ENCODE measurements at regions of chr12 and their contacts with region 1.

Region 1: DNA sequence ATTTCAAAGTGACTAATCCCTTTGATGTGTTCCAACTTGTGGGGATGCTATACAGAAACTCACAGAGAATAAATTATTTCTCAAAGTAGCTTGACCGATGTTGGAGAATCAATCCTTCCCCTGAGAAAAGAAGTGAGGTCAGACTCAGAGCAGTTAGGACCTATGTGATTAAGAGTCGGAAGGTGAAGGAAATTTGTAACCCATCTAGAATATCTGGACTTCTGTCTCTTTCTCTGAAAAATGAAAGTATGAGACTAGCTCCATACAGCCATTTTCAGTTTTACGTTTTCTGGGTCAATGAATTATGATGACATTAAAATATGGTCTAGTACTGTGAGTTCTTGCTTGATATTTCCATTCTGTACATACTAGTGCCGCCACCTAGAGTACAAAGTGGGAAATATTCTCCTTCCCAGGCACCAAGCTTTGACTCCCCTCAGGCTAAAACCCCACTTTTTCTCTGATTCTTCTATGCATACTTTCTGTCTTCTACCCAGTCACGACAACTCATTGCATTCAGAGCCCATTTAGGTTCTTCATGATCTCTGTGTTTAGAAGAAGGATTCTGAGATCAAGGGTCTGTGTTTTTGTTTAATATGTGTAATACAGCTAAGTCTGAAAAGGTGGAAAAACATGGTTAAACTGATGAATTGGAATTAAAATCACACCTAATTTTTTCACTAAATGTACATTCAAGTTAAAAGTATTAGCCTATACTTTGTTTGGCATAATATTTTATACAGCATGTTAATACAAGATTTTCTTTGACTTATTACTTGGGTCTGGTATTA is 6.9 kb upstream of the NTS start:
- DNase-seq: peak in 1 of 2 experiments; percentile 58
- H3K4me3 ChIP-seq: no peak overlapping the region
- H3K4me3 Mint-ChIP-seq: no peak overlapping the region
- H3K27ac Mint-ChIP-seq: no peak overlapping the region
- H3K4me1 ChIP-seq: no peaks in the 10 kb centered on the region
- H3K4me1 Mint-ChIP-seq: no peaks in the 10 kb centered on the region
- H3K27me3 ChIP-seq: no peaks in the 10 kb centered on the region
- H3K27me3 Mint-ChIP-seq: peaks cover 10% of the 10 kb centered on the region
- CTCF ChIP-seq: peak; percentile 71 to 75

Region 2: GRCh38 chr12:85626001-85626781 is 241.0 kb before region 1 on chr12:
- CTCF ChIA-PET with region 1: no interaction called
- POLR2A ChIA-PET with region 1: no interaction called
- intact Hi-C with region 1: no loop called
- DNase-seq: no peak
- H3K4me3 ChIP-seq: no peak overlapping the region
- H3K4me3 Mint-ChIP-seq: no peak overlapping the region
- H3K27ac Mint-ChIP-seq: no peak overlapping the region
- H3K4me1 ChIP-seq: 0 out of 2 replicates have a peak, but pooled peaks cover 3% of the 10 kb centered on the region
- H3K4me1 Mint-ChIP-seq: peaks cover 6% of the 10 kb centered on the region
- H3K27me3 ChIP-seq: no peaks in the 10 kb centered on the region
- H3K27me3 Mint-ChIP-seq: no peaks in the 10 kb centered on the region
- CTCF ChIP-seq: no peak

Region 3: GRCh38 chr12:85642810-85643209 is 224.4 kb before region 1 on chr12:
- CTCF ChIA-PET with region 1: no interaction called
- POLR2A ChIA-PET with region 1: no interaction called
- intact Hi-C with region 1: loop called (anchors 1 kb)
- DNase-seq: peak; percentile 47 to 68
- H3K4me3 ChIP-seq: no peak overlapping the region
- H3K4me3 Mint-ChIP-seq: no peak overlapping the region
- H3K27ac Mint-ChIP-seq: no peak overlapping the region
- H3K4me1 ChIP-seq: no peaks in the 10 kb centered on the region
- H3K4me1 Mint-ChIP-seq: no peaks in the 10 kb centered on the region
- H3K27me3 ChIP-seq: no peaks in the 10 kb centered on the region
- H3K27me3 Mint-ChIP-seq: no peaks in the 10 kb centered on the region
- CTCF ChIP-seq: peak; percentile 55 to 70

Region 4: DNA sequence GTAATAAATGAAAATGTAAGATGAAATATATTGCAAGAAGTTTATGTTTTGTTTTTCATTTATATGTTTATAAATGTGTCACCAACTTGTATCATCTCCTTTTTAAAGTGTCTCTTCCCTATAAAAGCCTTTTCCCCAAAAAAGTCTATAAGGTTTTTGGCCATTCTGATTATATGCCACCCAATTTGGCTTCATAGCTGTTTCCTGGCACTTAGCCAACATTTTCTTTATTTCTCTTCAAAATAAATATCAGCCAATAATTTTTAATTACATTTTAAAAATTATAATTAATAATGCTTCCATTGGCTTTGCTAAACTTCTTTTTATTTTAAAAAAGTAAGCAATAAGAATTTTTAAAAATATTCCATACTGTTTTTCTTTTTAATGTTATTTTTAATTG is 202.8 kb before region 1 on chr12:
- CTCF ChIA-PET with region 1: no interaction called
- POLR2A ChIA-PET with region 1: no interaction called
- intact Hi-C with region 1: no loop called
- DNase-seq: no peak
- H3K4me3 ChIP-seq: no peak overlapping the region
- H3K4me3 Mint-ChIP-seq: no peak overlapping the region
- H3K27ac Mint-ChIP-seq: no peak overlapping the region
- H3K4me1 ChIP-seq: no peaks in the 10 kb centered on the region
- H3K4me1 Mint-ChIP-seq: no peaks in the 10 kb centered on the region
- H3K27me3 ChIP-seq: no peaks in the 10 kb centered on the region
- H3K27me3 Mint-ChIP-seq: no peaks in the 10 kb centered on the region
- CTCF ChIP-seq: no peak

Region 5: GRCh38 chr12:85725991-85726390 is 141.2 kb before region 1 on chr12:
- CTCF ChIA-PET with region 1: interaction called, 3 read pairs
- POLR2A ChIA-PET with region 1: no interaction called
- intact Hi-C with region 1: loop called (anchors 1 kb)
- DNase-seq: no peak
- H3K4me3 ChIP-seq: no peak overlapping the region
- H3K4me3 Mint-ChIP-seq: no peak overlapping the region
- H3K27ac Mint-ChIP-seq: no peak overlapping the region
- H3K4me1 ChIP-seq: no peaks in the 10 kb centered on the region
- H3K4me1 Mint-ChIP-seq: no peaks in the 10 kb centered on the region
- H3K27me3 ChIP-seq: no peaks in the 10 kb centered on the region
- H3K27me3 Mint-ChIP-seq: no peaks in the 10 kb centered on the region
- CTCF ChIP-seq: peak in 1 of 2 experiments; percentile 12

Region 6: DNA sequence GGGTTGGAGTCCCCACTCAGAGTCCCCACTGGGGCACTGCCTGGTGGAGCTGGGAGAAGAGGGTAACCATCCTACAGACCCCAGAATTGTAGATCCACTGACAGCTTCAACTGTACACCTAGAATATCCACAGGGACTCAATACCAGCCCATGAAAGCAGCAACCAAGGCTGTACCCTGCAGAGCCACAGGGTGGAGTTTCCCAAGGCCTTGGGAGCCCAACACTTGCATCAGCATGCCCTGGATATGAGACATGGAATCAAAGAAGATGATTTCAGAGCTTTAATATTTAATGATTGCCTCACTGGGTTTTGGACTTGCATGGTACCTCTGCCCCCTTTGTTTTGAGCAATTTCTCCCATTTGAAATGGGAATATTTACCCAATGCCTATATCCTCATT is 111.4 kb before region 1 on chr12:
- CTCF ChIA-PET with region 1: no interaction called
- POLR2A ChIA-PET with region 1: no interaction called
- intact Hi-C with region 1: loop called (anchors 10 kb)
- DNase-seq: no peak
- H3K4me3 ChIP-seq: no peak overlapping the region
- H3K4me3 Mint-ChIP-seq: no peak overlapping the region
- H3K27ac Mint-ChIP-seq: no peak overlapping the region
- H3K4me1 ChIP-seq: peaks cover 4% of the 10 kb centered on the region; the same call in 1 of the 2 replicates
- H3K4me1 Mint-ChIP-seq: peaks cover 14% of the 10 kb centered on the region
- H3K27me3 ChIP-seq: no peaks in the 10 kb centered on the region
- H3K27me3 Mint-ChIP-seq: no peaks in the 10 kb centered on the region
- CTCF ChIP-seq: no peak

Region 7: DNA sequence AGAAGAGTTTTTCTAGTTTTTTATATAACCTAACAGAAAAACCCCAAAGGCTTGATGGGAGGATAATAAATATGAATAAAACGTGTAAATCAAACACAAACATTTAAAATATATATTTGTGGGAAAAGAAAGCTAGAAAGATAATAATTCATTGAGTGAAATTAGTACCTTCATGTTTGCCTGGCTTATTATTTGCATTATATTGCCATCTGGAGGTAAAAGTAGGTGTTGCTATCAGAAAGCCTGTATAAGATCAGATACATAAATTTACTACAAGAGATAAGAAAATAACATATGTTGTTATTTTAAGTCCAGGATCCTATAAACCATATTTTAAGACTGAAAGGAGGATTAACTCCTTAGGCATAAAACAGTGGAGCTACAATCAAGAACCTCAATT is 84.6 kb after region 1 on chr12:
- CTCF ChIA-PET with region 1: no interaction called
- POLR2A ChIA-PET with region 1: no interaction called
- intact Hi-C with region 1: no loop called
- DNase-seq: peak in 1 of 2 experiments; percentile 5
- H3K4me3 ChIP-seq: no peak overlapping the region
- H3K4me3 Mint-ChIP-seq: no peak overlapping the region
- H3K27ac Mint-ChIP-seq: no peak overlapping the region
- H3K4me1 ChIP-seq: no peaks in the 10 kb centered on the region
- H3K4me1 Mint-ChIP-seq: no peaks in the 10 kb centered on the region
- H3K27me3 ChIP-seq: no peaks in the 10 kb centered on the region
- H3K27me3 Mint-ChIP-seq: peaks cover 2% of the 10 kb centered on the region
- CTCF ChIP-seq: peak; percentile 14 to 37

Region 8: GRCh38 chr12:85963326-85963725 is 96.1 kb after region 1 on chr12:
- CTCF ChIA-PET with region 1: no interaction called
- POLR2A ChIA-PET with region 1: no interaction called
- intact Hi-C with region 1: no loop called
- DNase-seq: no peak
- H3K4me3 ChIP-seq: no peak overlapping the region
- H3K4me3 Mint-ChIP-seq: no peak overlapping the region
- H3K27ac Mint-ChIP-seq: no peak overlapping the region
- H3K4me1 ChIP-seq: no peaks in the 10 kb centered on the region
- H3K4me1 Mint-ChIP-seq: no peaks in the 10 kb centered on the region
- H3K27me3 ChIP-seq: no peaks in the 10 kb centered on the region
- H3K27me3 Mint-ChIP-seq: no peaks in the 10 kb centered on the region
- CTCF ChIP-seq: no peak

Measured in Caco-2 (cell line).